ENCODE measurements at regions of chr11 and their contacts with region 1.

Region 1: DNA sequence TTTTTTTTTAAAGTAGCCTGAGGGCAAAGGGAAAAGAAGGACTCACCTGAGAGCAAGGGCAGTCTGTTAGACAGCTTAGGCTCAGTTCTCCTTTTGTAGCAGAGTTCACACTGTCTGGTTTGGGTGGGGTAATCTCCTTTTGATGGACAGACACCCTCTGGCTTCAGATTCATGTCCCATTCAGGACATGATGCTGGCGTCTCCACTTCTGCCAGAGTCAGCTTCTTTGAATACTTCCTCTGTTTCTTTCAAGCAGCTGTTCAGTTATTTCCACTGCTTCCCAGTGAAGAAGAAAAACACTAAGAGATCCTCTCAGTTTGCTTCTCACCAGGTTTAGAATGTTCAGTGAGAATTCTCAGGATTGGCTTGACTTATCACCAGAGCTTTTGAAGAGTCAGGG is 79.0 kb upstream of the HSD17B12 start:
- DNase-seq: no peak
- CTCF ChIP-seq: no peak

Region 2: GRCh38 chr11:43852057-43852636 is 250.6 kb after region 1 on chr11:
- in situ Hi-C with region 1: loop called (anchors 25 kb)
- DNase-seq: peak; percentile 73
- CTCF ChIP-seq: peak; percentile 86

Measured in GM13977 (cell line).